Naive thymus-derived CD4-positive, alpha-beta T cell (primary cell): ENCODE measurements at regions of chr9 and their contacts with region 1.

Region 1: DNA sequence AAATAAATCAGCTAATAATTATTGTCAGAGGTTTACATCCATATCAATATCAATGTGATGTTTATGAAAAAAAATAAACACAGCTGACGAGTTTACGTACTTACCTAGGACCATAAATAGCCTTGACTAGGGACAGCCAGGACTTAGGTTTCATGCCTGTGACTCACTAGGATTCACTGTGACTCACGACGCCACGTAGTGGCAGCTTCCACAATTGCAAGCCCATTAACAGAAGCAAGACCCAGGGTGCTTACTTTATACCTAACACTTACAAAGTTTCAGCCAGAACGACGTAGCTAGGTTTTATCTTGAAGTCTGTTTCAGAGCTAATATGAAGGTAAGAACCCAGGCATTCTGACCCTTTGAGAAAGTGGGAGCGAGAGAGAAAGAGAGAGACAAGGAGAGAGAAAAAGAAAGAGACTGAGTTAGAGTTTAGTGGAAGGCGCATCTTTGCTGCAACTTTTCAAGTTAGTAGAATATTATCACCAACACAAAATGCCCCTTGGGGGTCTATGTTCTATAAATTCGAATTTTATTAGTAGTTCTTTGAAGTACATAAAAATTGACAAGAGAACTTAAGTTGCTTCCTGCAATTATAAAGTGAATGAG is 191.2 kb downstream of the GNA14 start:
- DNase-seq: peak; percentile 43 to 77 (median 68)
- ATAC-seq: peak; percentile 83
- H3K4me3 ChIP-seq: no peak overlapping the region
- H3K4me3 Mint-ChIP-seq: no peak overlapping the region
- H3K27ac ChIP-seq: no peak overlapping the region
- H3K27ac Mint-ChIP-seq: no peak overlapping the region
- H3K4me1 ChIP-seq: no peaks in the 10 kb centered on the region
- H3K4me1 Mint-ChIP-seq: peaks cover 9 to 30% (median 24%) of the 10 kb centered on the region in 7 donors
- H3K27me3 ChIP-seq: no peaks in the 10 kb centered on the region
- H3K27me3 Mint-ChIP-seq: no peaks in the 10 kb centered on the region

Region 2: GRCh38 chr9:77433675-77434445 is 23.1 kb before region 1 on chr9:
- CTCF ChIA-PET with region 1: interaction called, 12 read pairs
- POLR2A ChIA-PET with region 1: no interaction called
- intact Hi-C with region 1: loop called in 1 of 2 experiments (anchors 1 kb)
- DNase-seq: peak; percentile 24 to 62 (median 46)
- ATAC-seq: peak; percentile 90
- H3K4me3 ChIP-seq: no peak overlapping the region
- H3K4me3 Mint-ChIP-seq: peak overlapping the region in 3 of 10 donors; percentile 9 to 70 (median 29)
- H3K27ac ChIP-seq: no peak overlapping the region
- H3K27ac Mint-ChIP-seq: no peak overlapping the region
- H3K4me1 ChIP-seq: no peaks in the 10 kb centered on the region
- H3K4me1 Mint-ChIP-seq: peaks cover 4 to 6% (median 4%) of the 10 kb centered on the region in 7 donors
- H3K27me3 ChIP-seq: no peaks in the 10 kb centered on the region
- H3K27me3 Mint-ChIP-seq: peaks cover 0 to 8% (median 0%) of the 10 kb centered on the region in 5 donors

Region 3: DNA sequence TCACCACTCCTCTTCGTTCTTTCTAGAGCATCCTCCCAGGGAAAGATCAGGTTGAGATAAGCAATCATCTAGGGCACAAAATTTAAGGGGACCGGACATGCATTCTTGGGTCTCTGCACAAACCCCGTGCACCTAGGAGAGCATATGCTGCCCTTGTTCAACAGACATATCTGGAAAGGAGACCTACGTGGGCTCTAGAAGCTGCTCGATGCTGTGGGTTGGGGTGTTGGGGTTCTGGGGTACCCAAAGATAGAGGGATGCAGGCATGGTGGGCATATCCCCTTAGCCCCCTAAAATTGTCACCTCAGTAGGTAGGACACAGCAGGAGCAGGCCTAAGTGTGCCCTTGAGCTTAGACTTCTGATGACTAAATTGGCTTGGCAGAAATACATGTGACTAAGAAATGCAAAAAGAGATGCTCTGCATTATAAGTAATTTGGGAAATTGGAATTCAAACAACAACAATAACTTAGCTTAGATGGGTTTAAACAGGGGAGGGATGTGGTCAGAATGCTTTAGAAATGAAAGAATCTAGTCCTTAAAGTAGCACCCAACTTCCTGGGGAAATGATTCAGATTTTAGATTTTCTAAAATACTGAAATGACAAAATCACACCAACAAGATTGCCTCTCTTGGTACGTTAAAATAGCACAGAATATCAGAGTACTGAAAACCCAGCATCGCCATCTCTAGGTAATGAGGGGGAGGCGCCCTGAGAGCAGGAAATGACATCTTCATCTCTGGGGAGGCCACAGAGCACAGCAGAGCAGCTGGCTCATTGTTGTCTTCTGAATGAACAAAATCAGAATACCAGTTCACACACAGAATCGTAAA is 18.9 kb after region 1 on chr9:
- CTCF ChIA-PET with region 1: interaction called, 12 read pairs
- POLR2A ChIA-PET with region 1: no interaction called
- intact Hi-C with region 1: loop called (anchors 1 kb)
- DNase-seq: peak in 8 of 9 donors; percentile 24 to 64 (median 48)
- ATAC-seq: peak; percentile 96
- H3K4me3 ChIP-seq: peak overlapping the region; percentile 1
- H3K4me3 Mint-ChIP-seq: peak overlapping the region; percentile 13 to 74 (median 52)
- H3K27ac ChIP-seq: peak overlapping the region; percentile 64
- H3K27ac Mint-ChIP-seq: peak overlapping the region; percentile 90 to 97 (median 95)
- H3K4me1 ChIP-seq: peaks cover 0 to 19% of the 10 kb centered on the region in 2 donors
- H3K4me1 Mint-ChIP-seq: peaks cover 7 to 37% (median 29%) of the 10 kb centered on the region in 7 donors
- H3K27me3 ChIP-seq: no peaks in the 10 kb centered on the region
- H3K27me3 Mint-ChIP-seq: no peaks in the 10 kb centered on the region

Region 4: DNA sequence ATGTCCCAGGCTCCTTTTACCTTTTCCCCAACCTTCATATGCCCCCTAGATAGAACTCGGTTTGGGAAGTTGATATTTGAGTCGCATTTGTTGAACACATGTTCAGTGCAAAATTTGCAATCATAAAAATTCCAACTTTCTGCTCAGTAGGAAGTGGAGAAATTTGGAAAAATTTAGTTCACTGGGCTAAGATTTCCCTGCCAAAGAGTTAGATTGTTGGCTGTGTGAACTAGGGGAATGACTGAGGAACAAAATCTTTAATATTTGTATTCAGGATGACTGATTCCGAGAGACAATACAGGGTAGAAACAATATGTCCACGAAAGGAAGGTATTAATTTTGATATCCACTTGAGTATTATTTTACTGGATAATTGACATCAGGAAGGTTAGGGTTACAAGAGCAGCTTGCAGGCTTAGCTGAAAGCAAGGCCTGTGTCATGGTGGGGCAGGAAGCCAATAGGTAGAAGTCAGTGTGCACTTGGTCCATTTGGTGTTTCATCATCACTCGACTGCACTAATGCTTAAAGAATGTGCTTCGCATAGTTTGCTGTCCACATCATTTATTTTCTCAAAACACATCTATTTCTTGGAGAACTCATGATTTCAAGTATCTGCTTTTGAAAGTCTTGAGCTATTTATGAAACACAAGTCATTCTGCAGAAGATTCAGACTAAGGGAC is 250.6 kb after region 1 on chr9:
- CTCF ChIA-PET with region 1: no interaction called
- POLR2A ChIA-PET with region 1: no interaction called
- intact Hi-C with region 1: no loop called
- DNase-seq: no peak
- ATAC-seq: no peak
- H3K4me3 ChIP-seq: no peak overlapping the region
- H3K4me3 Mint-ChIP-seq: no peak overlapping the region
- H3K27ac ChIP-seq: no peak overlapping the region
- H3K27ac Mint-ChIP-seq: no peak overlapping the region
- H3K4me1 ChIP-seq: no peaks in the 10 kb centered on the region
- H3K4me1 Mint-ChIP-seq: peaks cover 0 to 4% (median 0%) of the 10 kb centered on the region in 7 donors
- H3K27me3 ChIP-seq: no peaks in the 10 kb centered on the region
- H3K27me3 Mint-ChIP-seq: peaks cover 0 to 3% (median 0%) of the 10 kb centered on the region in 5 donors

Region 5: DNA sequence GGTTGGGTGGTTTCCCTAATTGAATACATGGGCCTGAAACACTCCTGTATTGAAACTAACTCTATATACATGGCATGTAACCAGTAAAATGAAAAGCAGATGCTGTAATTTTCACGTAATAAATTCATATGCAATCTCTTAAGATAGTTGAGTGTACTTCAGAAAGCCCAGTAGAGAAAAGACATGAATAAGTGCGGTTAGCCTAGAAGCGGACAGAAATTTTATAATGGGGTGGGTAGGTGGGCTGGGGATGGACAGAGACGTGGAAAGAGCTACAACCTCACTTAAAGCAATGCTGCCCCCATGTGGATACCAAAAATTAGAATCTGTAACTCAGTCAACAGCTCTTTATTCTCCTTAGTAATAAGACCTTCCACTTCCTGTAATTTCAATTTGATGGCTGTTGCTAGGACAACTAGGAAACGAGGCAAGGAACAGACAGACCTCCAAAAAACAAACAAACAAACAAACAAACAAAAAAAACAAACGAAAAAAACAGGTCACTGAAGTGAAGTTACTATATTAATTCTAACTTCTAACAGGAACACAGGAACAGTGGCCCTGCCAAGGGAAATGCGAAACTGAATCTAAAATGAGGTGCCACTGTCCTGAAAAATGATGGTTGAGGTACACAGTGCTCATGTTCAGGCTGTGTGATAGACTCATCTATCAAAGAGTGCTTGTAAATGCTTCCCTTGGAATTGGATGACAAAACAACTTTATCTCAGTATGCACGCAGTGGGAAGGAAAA is 294.6 kb after region 1 on chr9:
- CTCF ChIA-PET with region 1: no interaction called
- POLR2A ChIA-PET with region 1: no interaction called
- intact Hi-C with region 1: loop called (anchors 1 kb)
- DNase-seq: peak in 6 of 9 donors; percentile 4 to 28 (median 22)
- ATAC-seq: peak; percentile 57
- H3K4me3 ChIP-seq: no peak overlapping the region
- H3K4me3 Mint-ChIP-seq: no peak overlapping the region
- H3K27ac ChIP-seq: no peak overlapping the region
- H3K27ac Mint-ChIP-seq: peak overlapping the region in 5 of 9 donors; percentile 4 to 86 (median 29)
- H3K4me1 ChIP-seq: no peaks in the 10 kb centered on the region
- H3K4me1 Mint-ChIP-seq: peaks cover 15 to 34% (median 28%) of the 10 kb centered on the region in 7 donors
- H3K27me3 ChIP-seq: no peaks in the 10 kb centered on the region
- H3K27me3 Mint-ChIP-seq: no peaks in the 10 kb centered on the region

Region 6: DNA sequence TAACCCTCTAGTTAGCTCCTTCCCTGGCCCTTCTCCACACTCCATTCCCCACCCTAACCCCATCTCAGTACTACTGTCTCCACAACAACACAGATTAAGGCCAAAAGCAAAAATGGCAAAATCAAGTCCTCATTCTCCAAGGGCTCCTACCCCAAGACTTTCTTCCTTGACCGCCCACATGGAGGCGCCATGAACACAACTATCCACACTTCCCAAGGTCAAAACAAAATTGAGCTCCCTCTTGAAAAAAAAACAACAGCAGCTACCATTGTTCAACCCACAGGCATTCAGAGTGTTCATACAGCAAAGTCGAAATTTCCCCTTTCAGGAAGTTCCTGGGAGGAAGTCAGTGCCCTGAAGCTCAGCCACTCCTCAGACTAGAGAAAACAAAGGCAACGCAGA is 520.3 kb after region 1 on chr9:
- CTCF ChIA-PET with region 1: no interaction called
- POLR2A ChIA-PET with region 1: no interaction called
- intact Hi-C with region 1: loop called in 1 of 2 experiments (anchors 5 kb)
- DNase-seq: peak; percentile 12 to 58 (median 47)
- ATAC-seq: peak; percentile 78
- H3K4me3 ChIP-seq: peak overlapping the region; percentile 2
- H3K4me3 Mint-ChIP-seq: peak overlapping the region in 9 of 10 donors; percentile 29 to 77 (median 60)
- H3K27ac ChIP-seq: peak overlapping the region; percentile 20
- H3K27ac Mint-ChIP-seq: peak overlapping the region; percentile 57 to 87 (median 78)
- H3K4me1 ChIP-seq: peaks cover 23 to 45% of the 10 kb centered on the region in 2 donors
- H3K4me1 Mint-ChIP-seq: peaks cover 41 to 76% (median 62%) of the 10 kb centered on the region in 7 donors
- H3K27me3 ChIP-seq: no peaks in the 10 kb centered on the region
- H3K27me3 Mint-ChIP-seq: no peaks in the 10 kb centered on the region